SK-N-SH (cell line): ENCODE measurements at regions of chr13 and their contacts with region 1.

Region 1: GRCh38 chr13:114226699-114227323 is 7.9 kb upstream of the CDC16 start:
- DNase-seq: peak; percentile 88
- H3K4me3 ChIP-seq: no peak overlapping the region; a peak in 1 of 4 replicates
- H3K27ac ChIP-seq: peak overlapping the region in 1 of 2 experiments; percentile 31; a peak in 1 of 4 replicates
- H3K4me1 ChIP-seq: peaks cover 0 to 15% of the 10 kb centered on the region in 2 experiments; a peak in 1 of 4 replicates
- H3K27me3 ChIP-seq: no peaks in the 10 kb centered on the region; the same call in 1 of the 2 replicates
- CTCF ChIP-seq: peak; percentile 85
- EP300 ChIP-seq: peak in 1 of 2 experiments; percentile 47; a peak in 2 of 4 replicates
- RAD21 ChIP-seq: peak; percentile 100

Region 2: GRCh38 chr13:113816946-113817859 is 409.6 kb before region 1 on chr13:
- CTCF ChIA-PET with region 1: interaction called, 13 read pairs
- POLR2A ChIA-PET with region 1: no interaction called
- DNase-seq: peak; percentile 91
- H3K4me3 ChIP-seq: peak overlapping the region in 1 of 2 experiments; percentile 40; a peak in 1 of 4 replicates
- H3K27ac ChIP-seq: peak overlapping the region in 1 of 2 experiments; percentile 60; a peak in 2 of 4 replicates
- H3K4me1 ChIP-seq: peaks cover 36 to 52% of the 10 kb centered on the region in 2 experiments; a peak in 3 of 4 replicates
- H3K27me3 ChIP-seq: no peaks in the 10 kb centered on the region
- CTCF ChIP-seq: peak; percentile 82
- EP300 ChIP-seq: no peak
- RAD21 ChIP-seq: peak; percentile 97

Region 3: GRCh38 chr13:114025714-114026431 is 200.9 kb before region 1 on chr13:
- CTCF ChIA-PET with region 1: interaction called, 10 read pairs
- POLR2A ChIA-PET with region 1: no interaction called
- DNase-seq: peak; percentile 85
- H3K4me3 ChIP-seq: no peak overlapping the region
- H3K27ac ChIP-seq: peak overlapping the region in 1 of 2 experiments; percentile 78; a peak in 2 of 4 replicates
- H3K4me1 ChIP-seq: peaks cover 0 to 22% of the 10 kb centered on the region in 2 experiments; a peak in 1 of 4 replicates
- H3K27me3 ChIP-seq: no peaks in the 10 kb centered on the region
- CTCF ChIP-seq: no peak
- EP300 ChIP-seq: no peak
- RAD21 ChIP-seq: peak; percentile 55

Region 4: DNA sequence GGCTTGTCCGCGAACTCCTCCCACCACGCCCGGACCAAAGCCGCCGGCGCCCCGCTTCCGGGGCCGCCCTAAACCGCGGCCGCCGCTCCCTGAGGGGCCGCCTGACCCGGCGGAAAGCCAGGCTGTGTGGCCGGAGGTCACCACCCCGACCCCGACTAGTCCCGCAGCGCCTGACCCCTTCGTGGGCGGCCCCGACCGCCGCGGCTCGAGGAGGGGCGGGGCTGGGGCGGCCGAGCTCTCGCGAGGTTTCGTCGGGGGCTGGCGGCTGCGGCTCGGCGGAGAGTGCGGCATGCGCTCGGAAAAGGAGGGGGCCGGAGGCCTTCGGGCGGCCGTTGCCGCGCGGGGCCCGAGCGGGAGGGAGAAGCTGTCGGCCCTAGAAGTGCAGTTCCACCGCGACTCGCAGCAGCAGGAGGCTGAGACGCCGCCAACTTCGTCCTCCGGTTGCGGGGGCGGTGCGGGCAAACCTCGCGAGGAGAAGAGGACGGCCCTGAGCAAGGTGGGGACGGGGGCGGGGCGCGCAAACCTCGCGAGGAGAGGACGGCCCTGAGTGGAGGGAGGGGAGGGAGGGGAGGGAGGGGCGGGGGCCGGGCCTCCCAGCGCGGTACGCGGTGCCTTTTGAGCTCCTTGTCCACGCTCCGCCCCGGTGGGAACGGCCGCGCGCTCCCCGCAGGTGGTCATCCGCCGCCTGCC is 54.7 kb after region 1 on chr13 and contains the start of gene UPF3A:
- CTCF ChIA-PET with region 1: no interaction called
- POLR2A ChIA-PET with region 1: no interaction called
- DNase-seq: peak; percentile 95
- H3K4me3 ChIP-seq: peak within 1 kb of the TSS; percentile 83 to 86
- H3K27ac ChIP-seq: peak within 1 kb of the TSS; percentile 93 to 97
- H3K4me1 ChIP-seq: peaks cover 17 to 21% of the 10 kb centered on the region in 2 experiments
- H3K27me3 ChIP-seq: no peaks in the 10 kb centered on the region
- CTCF ChIP-seq: no peak
- EP300 ChIP-seq: no peak
- RAD21 ChIP-seq: no peak
- polyA plus RNA-seq, gene UPF3A: 63.2 and 74.4 TPM in 2 replicates